H1 (cell line): ENCODE measurements at regions of chr10 and their contacts with region 1.

Region 1: GRCh38 chr10:121823993-121824463 is 103.8 kb downstream of the ATE1 start:
- DNase-seq: no peak
- H3K4me3 ChIP-seq: no peak overlapping the region
- H3K27ac ChIP-seq: no peak overlapping the region
- H3K4me1 ChIP-seq: no peaks in the 10 kb centered on the region; a peak in 1 of 7 replicates
- H3K27me3 ChIP-seq: no peaks in the 10 kb centered on the region
- CTCF ChIP-seq: peak in 2 of 3 experiments; percentile 27 to 53; a peak in 2 of 4 replicates
- EP300 ChIP-seq: no peak
- POLR2A ChIP-seq: no peak
- RAD21 ChIP-seq: peak; percentile 25 to 43; a peak in 3 of 4 replicates

Region 2: DNA sequence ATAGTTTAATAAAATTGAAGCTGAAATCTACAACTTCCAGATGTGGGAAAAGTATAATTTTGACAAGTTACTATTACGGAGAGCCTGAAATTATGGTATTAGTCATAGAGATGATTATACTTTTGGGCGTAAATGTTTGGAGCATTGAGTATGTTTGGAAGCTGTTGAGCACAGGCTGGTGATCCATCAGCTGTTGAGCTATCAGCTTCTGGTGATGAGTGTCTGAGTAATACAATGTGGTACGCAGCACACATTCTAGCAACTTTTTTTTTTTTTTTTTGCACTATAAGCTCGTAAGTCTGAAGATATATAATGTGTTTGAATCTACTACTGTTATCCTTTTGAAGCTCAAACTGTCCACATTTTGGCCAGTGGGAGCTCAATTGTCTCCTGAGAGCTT is 19.6 kb before region 1 on chr10:
- CTCF ChIA-PET with region 1: interaction called, 25 read pairs
- POLR2A ChIA-PET with region 1: no interaction called
- DNase-seq: no peak
- H3K4me3 ChIP-seq: no peak overlapping the region
- H3K27ac ChIP-seq: no peak overlapping the region
- H3K4me1 ChIP-seq: no peaks in the 10 kb centered on the region
- H3K27me3 ChIP-seq: no peaks in the 10 kb centered on the region
- CTCF ChIP-seq: no peak
- EP300 ChIP-seq: no peak
- POLR2A ChIP-seq: no peak
- RAD21 ChIP-seq: no peak

Region 3: DNA sequence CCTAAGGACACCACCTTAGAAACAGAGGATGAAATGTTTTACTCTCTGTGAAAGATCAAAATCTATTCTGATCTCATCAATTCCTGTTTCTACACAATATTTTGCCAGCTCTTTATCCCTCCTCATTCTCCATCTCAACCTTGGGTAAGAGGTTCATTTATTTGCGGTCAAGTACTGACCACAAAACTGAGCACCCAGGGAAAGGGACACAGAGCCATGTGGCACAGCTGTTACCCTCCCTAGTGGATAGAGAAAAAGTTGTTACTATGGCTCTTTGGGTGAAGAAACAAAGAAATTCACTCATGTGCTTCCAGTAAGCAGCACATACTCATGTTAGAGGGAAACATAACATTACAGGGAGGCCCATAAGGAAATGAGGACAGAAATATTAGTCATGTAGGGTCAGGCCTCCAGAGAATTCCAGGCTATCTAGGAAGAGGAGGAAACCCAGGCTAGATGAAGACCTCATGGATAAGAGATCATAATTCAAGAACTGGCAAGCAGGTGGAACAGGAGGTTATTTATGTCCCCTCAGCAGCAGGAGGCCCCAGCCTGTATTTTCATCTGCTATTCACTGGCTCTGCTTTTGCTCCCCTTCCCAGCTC is 10.7 kb before region 1 on chr10:
- CTCF ChIA-PET with region 1: interaction called, 26 read pairs
- POLR2A ChIA-PET with region 1: interaction called, 5 read pairs
- DNase-seq: no peak
- H3K4me3 ChIP-seq: no peak overlapping the region
- H3K27ac ChIP-seq: no peak overlapping the region
- H3K4me1 ChIP-seq: no peaks in the 10 kb centered on the region
- H3K27me3 ChIP-seq: no peaks in the 10 kb centered on the region
- CTCF ChIP-seq: no peak
- EP300 ChIP-seq: no peak
- POLR2A ChIP-seq: no peak
- RAD21 ChIP-seq: no peak

Region 4: GRCh38 chr10:121880895-121881294 is 56.9 kb after region 1 on chr10:
- CTCF ChIA-PET with region 1: interaction called, 43 read pairs
- POLR2A ChIA-PET with region 1: no interaction called
- DNase-seq: no peak
- H3K4me3 ChIP-seq: no peak overlapping the region
- H3K27ac ChIP-seq: no peak overlapping the region
- H3K4me1 ChIP-seq: no peaks in the 10 kb centered on the region
- H3K27me3 ChIP-seq: no peaks in the 10 kb centered on the region
- CTCF ChIP-seq: no peak
- EP300 ChIP-seq: no peak
- POLR2A ChIP-seq: no peak
- RAD21 ChIP-seq: no peak

Region 5: GRCh38 chr10:121886997-121887622 is 63.1 kb after region 1 on chr10:
- CTCF ChIA-PET with region 1: interaction called, 43 read pairs
- POLR2A ChIA-PET with region 1: interaction called, 4 read pairs
- DNase-seq: peak; percentile 41 to 73
- H3K4me3 ChIP-seq: no peak overlapping the region
- H3K27ac ChIP-seq: no peak overlapping the region
- H3K4me1 ChIP-seq: peaks cover 2 to 9% (median 4%) of the 10 kb centered on the region in 4 experiments; a peak in 6 of 7 replicates
- H3K27me3 ChIP-seq: no peaks in the 10 kb centered on the region
- CTCF ChIP-seq: peak; percentile 74 to 98 (median 96)
- EP300 ChIP-seq: no peak
- POLR2A ChIP-seq: no peak
- RAD21 ChIP-seq: peak; percentile 85 to 86

Region 6: DNA sequence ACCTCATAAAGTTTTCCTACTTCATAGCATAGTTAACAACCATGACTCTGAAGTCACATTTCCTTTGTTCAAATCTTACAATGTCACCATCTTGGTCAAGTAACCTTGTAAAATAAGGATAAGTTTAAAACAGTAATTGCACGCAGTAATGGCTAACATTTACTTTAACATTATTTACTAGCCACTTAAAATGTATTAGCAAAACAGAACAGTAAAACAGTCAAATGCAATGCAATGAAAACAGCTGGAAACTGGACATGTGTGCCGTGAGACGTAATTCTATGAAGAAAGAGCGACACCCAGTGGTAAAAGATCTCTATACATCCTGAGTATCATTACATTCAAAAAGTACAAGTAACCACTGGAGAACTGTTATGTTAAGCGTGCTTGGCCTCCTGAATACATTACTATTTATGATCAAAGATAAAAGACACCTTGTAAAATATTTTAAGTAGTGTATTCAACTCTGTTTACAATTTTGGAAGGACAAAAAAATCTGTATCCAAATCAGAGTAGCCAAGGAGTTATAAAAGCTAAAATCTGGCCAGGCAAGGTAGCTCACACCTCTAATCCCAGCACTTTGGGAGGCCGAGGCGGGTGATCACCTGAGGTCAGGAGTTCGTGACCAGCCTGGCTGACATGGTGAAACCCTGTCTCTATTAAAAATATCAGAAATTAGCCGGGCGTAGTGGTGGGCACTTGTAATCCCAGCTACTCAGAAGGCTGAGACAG is 76.6 kb after region 1 on chr10:
- CTCF ChIA-PET with region 1: interaction called, 24 read pairs
- POLR2A ChIA-PET with region 1: no interaction called
- DNase-seq: no peak
- H3K4me3 ChIP-seq: no peak overlapping the region
- H3K27ac ChIP-seq: no peak overlapping the region
- H3K4me1 ChIP-seq: peaks cover 0 to 4% (median 0%) of the 10 kb centered on the region in 4 experiments; a peak in 2 of 7 replicates
- H3K27me3 ChIP-seq: no peaks in the 10 kb centered on the region
- CTCF ChIP-seq: peak in 2 of 3 experiments; percentile 61 to 76; a peak in 3 of 4 replicates
- EP300 ChIP-seq: no peak
- POLR2A ChIP-seq: no peak
- RAD21 ChIP-seq: peak; percentile 84